Endothelial cell of umbilical vein (primary cell): ENCODE measurements at regions of chr13 and their contacts with region 1.

Region 1: GRCh38 chr13:30872685-30873461 is 33.2 kb upstream of the MEDAG start:
- DNase-seq: peak; percentile 97
- H3K4me3 ChIP-seq: no peak overlapping the region
- H3K27ac ChIP-seq: peak overlapping the region; percentile 79
- H3K4me1 ChIP-seq: peaks cover 50% of the 10 kb centered on the region
- H3K27me3 ChIP-seq: no peaks in the 10 kb centered on the region
- CTCF ChIP-seq: no peak
- POLR2A ChIP-seq: no peak

Region 2: DNA sequence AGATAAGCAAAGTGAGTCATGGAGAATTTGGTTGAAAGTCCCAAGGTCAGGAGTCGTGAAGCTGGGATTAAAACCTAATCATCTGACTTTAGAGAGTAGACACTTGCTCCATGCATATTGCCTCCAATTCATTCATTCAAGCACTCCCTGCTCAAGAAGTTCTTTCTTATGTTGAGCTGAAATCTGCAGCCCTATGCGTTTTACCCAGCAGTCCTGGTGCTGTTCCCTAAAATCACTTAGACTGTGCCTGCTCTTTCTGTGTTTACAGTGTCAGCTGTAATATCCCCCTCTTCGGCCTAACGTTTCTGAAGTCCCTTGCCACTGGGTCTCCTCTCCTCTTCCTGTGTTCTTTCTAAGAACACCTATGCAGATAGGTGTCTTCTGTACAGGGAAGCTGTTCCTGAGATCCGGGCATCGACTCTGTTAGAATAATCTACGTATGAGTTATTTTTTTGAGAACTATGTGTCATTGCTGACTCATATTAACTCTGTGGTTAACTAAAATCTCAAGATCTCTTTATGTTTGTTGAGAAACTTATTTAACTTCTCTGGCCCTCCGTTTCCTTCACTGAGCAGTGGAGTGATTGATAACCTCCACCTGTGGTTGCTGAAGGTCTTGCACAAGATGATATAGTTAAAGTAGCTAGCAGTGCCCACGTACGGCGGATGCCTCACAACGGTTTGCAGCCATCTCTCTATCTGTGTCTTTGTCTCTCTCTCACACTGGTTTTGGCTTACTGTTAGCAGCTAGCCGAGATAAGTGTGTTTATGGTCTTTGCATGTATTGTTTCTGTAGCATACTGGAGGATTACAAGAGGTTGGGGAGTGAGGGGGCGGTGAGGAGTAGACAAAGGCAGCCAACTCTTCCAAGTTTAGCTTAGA is 132.9 kb before region 1 on chr13:
- CTCF ChIA-PET with region 1: no interaction called
- POLR2A ChIA-PET with region 1: no interaction called
- dilution Hi-C with region 1: no loop called
- intact Hi-C with region 1: no loop called
- DNase-seq: peak; percentile 64
- H3K4me3 ChIP-seq: no peak overlapping the region
- H3K27ac ChIP-seq: peak overlapping the region; percentile 66
- H3K4me1 ChIP-seq: peaks cover 50% of the 10 kb centered on the region
- H3K27me3 ChIP-seq: no peaks in the 10 kb centered on the region
- CTCF ChIP-seq: no peak
- POLR2A ChIP-seq: no peak

Region 3: GRCh38 chr13:30892966-30893365 is 20.1 kb after region 1 on chr13:
- CTCF ChIA-PET with region 1: interaction called, 10 read pairs
- POLR2A ChIA-PET with region 1: interaction called, 3 read pairs
- dilution Hi-C with region 1: no loop called
- intact Hi-C with region 1: loop called (anchors 1 kb)
- DNase-seq: no peak
- H3K4me3 ChIP-seq: no peak overlapping the region
- H3K27ac ChIP-seq: no peak overlapping the region
- H3K4me1 ChIP-seq: peaks cover 12% of the 10 kb centered on the region
- H3K27me3 ChIP-seq: no peaks in the 10 kb centered on the region
- CTCF ChIP-seq: peak; percentile 47 to 51
- POLR2A ChIP-seq: no peak